Colonic mucosa (tissue), 4 donors: ENCODE measurements at regions of chr7 and their contacts with region 1.

Region 1: DNA sequence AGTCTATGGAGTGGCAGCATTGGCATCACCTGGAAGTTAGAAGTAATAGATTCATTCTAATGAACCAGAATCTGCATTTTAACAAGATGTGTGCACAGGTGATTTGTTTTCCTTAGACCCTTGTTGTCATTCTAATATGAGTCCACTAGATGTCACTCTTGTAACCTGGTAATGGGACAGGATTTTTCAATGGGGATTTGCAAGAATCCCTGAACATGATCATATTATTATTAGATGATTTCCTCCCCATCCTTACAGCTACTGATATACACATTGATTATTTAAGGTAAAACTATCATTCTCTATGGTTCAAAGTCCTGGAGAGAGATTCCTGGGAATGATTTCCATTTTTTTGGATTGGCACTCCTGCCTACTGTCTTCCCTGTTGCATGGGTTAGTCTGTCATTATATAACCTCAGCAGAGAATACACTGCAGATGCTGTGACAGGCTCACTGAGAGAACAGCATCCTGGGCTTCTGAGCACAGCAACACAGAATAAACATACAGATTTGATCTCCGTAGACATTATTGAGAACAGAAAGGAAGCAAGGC is 194.9 kb downstream of the SUGCT start:
- DNase-seq: no peak
- H3K4me3 ChIP-seq: no peak overlapping the region
- H3K27ac ChIP-seq: no peak overlapping the region
- H3K4me1 ChIP-seq: peaks cover 6% of the 10 kb centered on the region
- H3K27me3 ChIP-seq: no peaks in the 10 kb centered on the region
- CTCF ChIP-seq: peak; percentile 65

Region 2: GRCh38 chr7:40583667-40584444 is 254.2 kb after region 1 on chr7:
- intact Hi-C with region 1: no loop called
- DNase-seq: no peak
- H3K4me3 ChIP-seq: no peak overlapping the region
- H3K27ac ChIP-seq: no peak overlapping the region
- H3K4me1 ChIP-seq: no peaks in the 10 kb centered on the region
- H3K27me3 ChIP-seq: no peaks in the 10 kb centered on the region
- CTCF ChIP-seq: no peak

Region 3: DNA sequence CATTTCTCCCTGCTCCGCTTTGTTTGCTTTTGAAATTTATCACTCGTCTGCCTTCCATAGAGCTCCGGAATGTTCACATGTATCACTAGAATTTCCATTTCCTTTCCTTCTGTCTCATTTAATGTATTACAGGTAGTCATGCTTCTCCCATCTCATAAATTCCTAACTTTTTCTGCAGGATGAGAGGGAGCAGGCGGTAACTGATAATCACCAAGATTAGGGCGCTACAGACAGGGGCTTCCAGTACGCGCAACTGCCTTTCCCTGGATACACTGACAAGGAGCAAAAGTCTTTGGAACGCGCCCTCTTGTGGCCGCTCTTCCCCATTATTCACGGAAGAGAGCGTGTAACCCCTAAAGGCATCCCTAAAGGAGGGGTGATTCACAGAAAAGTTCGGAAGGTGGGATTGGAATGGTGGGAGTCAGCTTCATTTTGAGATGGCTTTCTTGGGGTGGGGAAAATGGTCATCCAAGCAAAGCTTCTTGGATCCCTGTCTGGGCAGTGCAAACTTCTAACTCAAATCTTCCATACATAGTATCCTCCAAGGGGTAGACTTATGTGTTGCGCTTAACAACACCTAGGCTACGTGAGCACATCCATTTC is 1366.7 kb after region 1 on chr7:
- intact Hi-C with region 1: loop called (anchors 5 kb)
- DNase-seq: peak; percentile 77
- H3K4me3 ChIP-seq: no peak overlapping the region
- H3K27ac ChIP-seq: no peak overlapping the region
- H3K4me1 ChIP-seq: no peaks in the 10 kb centered on the region
- H3K27me3 ChIP-seq: no peaks in the 10 kb centered on the region
- CTCF ChIP-seq: peak; percentile 62